Calu3 (cell line): ENCODE measurements at regions of chr4 and their contacts with region 1.

Region 1: GRCh38 chr4:68655764-68656444 is 14.5 kb downstream of the UGT2B15 start:
- DNase-seq: peak; percentile 34
- H3K4me3 Mint-ChIP-seq: peak overlapping the region; percentile 21
- H3K27ac Mint-ChIP-seq: peak overlapping the region; percentile 88
- H3K4me1 Mint-ChIP-seq: peaks cover 24% of the 10 kb centered on the region
- H3K27me3 Mint-ChIP-seq: no peaks in the 10 kb centered on the region
- CTCF ChIP-seq: no peak

Region 2: GRCh38 chr4:68349649-68350360 is 306.1 kb before region 1 on chr4 and contains the start of gene YTHDC1:
- CTCF ChIA-PET with region 1: no interaction called
- intact Hi-C with region 1: no loop called
- DNase-seq: peak; percentile 92
- H3K4me3 Mint-ChIP-seq: peak within 1 kb of the TSS; percentile 98
- H3K27ac Mint-ChIP-seq: peak within 1 kb of the TSS; percentile 94
- H3K4me1 Mint-ChIP-seq: no peaks in the 10 kb centered on the region
- H3K27me3 Mint-ChIP-seq: no peaks in the 10 kb centered on the region
- CTCF ChIP-seq: no peak
- total RNA-seq, gene YTHDC1: 68.6 and 79.4 TPM in 2 replicates

Region 3: GRCh38 chr4:68732653-68733466 is 77.0 kb after region 1 on chr4:
- CTCF ChIA-PET with region 1: no interaction called
- intact Hi-C with region 1: loop called (anchors 1 kb)
- DNase-seq: peak; percentile 53
- H3K4me3 Mint-ChIP-seq: peak overlapping the region; percentile 6
- H3K27ac Mint-ChIP-seq: peak overlapping the region; percentile 61
- H3K4me1 Mint-ChIP-seq: peaks cover 45% of the 10 kb centered on the region
- H3K27me3 Mint-ChIP-seq: no peaks in the 10 kb centered on the region
- CTCF ChIP-seq: no peak

Region 4: GRCh38 chr4:68855771-68856170 is 199.9 kb after region 1 on chr4:
- CTCF ChIA-PET with region 1: no interaction called
- intact Hi-C with region 1: no loop called
- DNase-seq: no peak
- H3K4me3 Mint-ChIP-seq: no peak overlapping the region
- H3K27ac Mint-ChIP-seq: no peak overlapping the region
- H3K4me1 Mint-ChIP-seq: no peaks in the 10 kb centered on the region
- H3K27me3 Mint-ChIP-seq: no peaks in the 10 kb centered on the region
- CTCF ChIP-seq: no peak

Region 5: DNA sequence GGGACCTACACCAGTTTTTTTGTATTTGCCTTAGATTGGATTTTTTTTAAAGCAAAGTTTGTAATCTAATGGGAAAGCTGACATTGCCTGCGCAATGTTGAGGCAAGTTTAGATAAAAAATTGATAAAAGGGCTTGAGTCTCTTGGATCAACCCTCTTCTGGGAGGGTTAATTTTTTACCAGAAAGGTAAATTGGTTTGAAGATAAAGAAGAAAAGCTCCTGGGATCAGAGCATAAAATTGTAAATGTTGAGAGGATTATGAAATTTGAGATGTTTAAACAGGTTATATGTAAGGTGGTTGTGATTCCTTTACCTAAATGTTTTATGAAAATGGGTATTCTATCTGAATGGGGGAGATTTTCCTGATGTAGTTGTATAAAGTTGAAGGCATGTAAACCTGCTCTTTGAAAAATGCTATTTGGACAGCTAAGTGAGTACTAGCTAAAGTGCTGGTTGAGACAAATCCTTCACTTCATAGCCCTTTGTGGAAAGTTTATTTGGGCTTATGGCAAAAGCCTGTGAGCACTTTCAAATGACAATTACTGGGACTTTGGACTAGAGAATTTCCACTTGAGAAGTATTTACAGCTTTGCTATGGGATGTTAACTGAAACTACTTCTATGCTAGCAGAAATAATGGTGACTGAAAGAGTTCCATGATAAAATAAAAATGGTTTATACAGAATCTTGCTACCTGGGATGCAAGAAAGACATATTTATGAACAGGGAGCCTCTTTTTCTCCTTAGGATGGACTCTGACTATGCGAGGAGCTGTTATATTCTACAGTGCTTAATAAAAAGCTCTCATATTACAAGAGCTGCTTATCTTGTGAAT is 216.1 kb after region 1 on chr4:
- CTCF ChIA-PET with region 1: no interaction called
- intact Hi-C with region 1: loop called (anchors 5 kb)
- DNase-seq: no peak
- H3K4me3 Mint-ChIP-seq: no peak overlapping the region
- H3K27ac Mint-ChIP-seq: peak overlapping the region; percentile 31
- H3K4me1 Mint-ChIP-seq: peaks cover 16% of the 10 kb centered on the region
- H3K27me3 Mint-ChIP-seq: no peaks in the 10 kb centered on the region
- CTCF ChIP-seq: no peak

Region 6: DNA sequence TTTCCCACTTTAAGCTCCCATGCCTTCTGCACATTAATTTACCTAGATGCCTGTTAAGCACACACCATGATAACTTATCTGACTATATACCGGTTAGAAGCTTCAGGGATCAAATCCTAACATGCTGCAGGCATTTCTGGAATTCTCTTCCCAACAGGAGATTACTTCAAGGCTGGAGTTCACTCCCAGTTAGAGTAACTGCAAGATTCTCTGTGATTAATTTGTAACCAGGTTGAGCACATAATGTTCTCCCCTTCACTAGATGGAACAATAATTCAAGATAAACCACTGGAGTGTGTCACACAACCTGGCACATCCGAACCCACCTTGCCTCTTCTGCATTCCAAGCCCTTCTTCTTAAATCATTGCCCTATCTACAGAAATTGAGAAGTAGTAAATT is 307.5 kb after region 1 on chr4:
- CTCF ChIA-PET with region 1: no interaction called
- intact Hi-C with region 1: loop called (anchors 5 kb)
- DNase-seq: no peak
- H3K4me3 Mint-ChIP-seq: peak overlapping the region; percentile 44
- H3K27ac Mint-ChIP-seq: peak overlapping the region; percentile 6
- H3K4me1 Mint-ChIP-seq: peaks cover 37% of the 10 kb centered on the region
- H3K27me3 Mint-ChIP-seq: no peaks in the 10 kb centered on the region
- CTCF ChIP-seq: no peak

Region 7: GRCh38 chr4:69038582-69038981 is 382.7 kb after region 1 on chr4:
- CTCF ChIA-PET with region 1: no interaction called
- intact Hi-C with region 1: loop called (anchors 5 kb)
- DNase-seq: peak; percentile 55
- H3K4me3 Mint-ChIP-seq: peak overlapping the region; percentile 35
- H3K27ac Mint-ChIP-seq: peak overlapping the region; percentile 98
- H3K4me1 Mint-ChIP-seq: peaks cover 49% of the 10 kb centered on the region
- H3K27me3 Mint-ChIP-seq: no peaks in the 10 kb centered on the region
- CTCF ChIP-seq: no peak

Region 8: DNA sequence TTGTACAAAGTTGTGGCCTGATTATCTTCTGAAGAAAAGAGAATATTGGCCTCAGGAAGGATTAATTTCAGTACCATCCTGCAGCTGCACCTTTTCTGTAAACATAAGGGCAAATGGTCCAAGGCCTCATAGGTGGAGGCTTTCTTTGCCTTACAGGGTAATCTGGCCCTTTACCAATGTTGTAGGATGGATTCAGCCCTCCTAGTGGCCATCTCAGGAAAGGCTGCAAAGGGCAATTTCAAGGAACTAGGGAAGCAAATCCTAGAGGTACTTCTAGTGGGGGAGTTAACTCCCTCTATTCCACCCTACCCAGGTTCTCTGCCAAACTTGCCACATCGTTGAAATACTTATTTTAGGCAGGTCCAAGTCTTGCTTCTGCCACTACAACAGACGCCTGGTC is 501.0 kb after region 1 on chr4:
- CTCF ChIA-PET with region 1: no interaction called
- intact Hi-C with region 1: no loop called
- DNase-seq: peak; percentile 27
- H3K4me3 Mint-ChIP-seq: no peak overlapping the region
- H3K27ac Mint-ChIP-seq: no peak overlapping the region
- H3K4me1 Mint-ChIP-seq: no peaks in the 10 kb centered on the region
- H3K27me3 Mint-ChIP-seq: no peaks in the 10 kb centered on the region
- CTCF ChIP-seq: no peak

Region 9: GRCh38 chr4:69167300-69167699 is 511.4 kb after region 1 on chr4:
- CTCF ChIA-PET with region 1: no interaction called
- intact Hi-C with region 1: loop called (anchors 5 kb)
- DNase-seq: no peak
- H3K4me3 Mint-ChIP-seq: no peak overlapping the region
- H3K27ac Mint-ChIP-seq: peak overlapping the region; percentile 51
- H3K4me1 Mint-ChIP-seq: peaks cover 18% of the 10 kb centered on the region
- H3K27me3 Mint-ChIP-seq: no peaks in the 10 kb centered on the region
- CTCF ChIP-seq: no peak